Activated naive CD4-positive, alpha-beta T cell treated with anti-CD3 and anti-CD28 coated beads for 36 hours (primary cell): ENCODE measurements at regions of chr4 and their contacts with region 1.

Region 1: GRCh38 chr4:1266881-1267763 is 18.2 kb upstream of the CTBP1 start:
- DNase-seq: no peak
- H3K4me3 Mint-ChIP-seq: peak overlapping the region; percentile 58
- H3K27ac Mint-ChIP-seq: peak overlapping the region; percentile 65
- H3K4me1 Mint-ChIP-seq: peaks cover 10% of the 10 kb centered on the region
- H3K27me3 Mint-ChIP-seq: no peaks in the 10 kb centered on the region

Region 2: DNA sequence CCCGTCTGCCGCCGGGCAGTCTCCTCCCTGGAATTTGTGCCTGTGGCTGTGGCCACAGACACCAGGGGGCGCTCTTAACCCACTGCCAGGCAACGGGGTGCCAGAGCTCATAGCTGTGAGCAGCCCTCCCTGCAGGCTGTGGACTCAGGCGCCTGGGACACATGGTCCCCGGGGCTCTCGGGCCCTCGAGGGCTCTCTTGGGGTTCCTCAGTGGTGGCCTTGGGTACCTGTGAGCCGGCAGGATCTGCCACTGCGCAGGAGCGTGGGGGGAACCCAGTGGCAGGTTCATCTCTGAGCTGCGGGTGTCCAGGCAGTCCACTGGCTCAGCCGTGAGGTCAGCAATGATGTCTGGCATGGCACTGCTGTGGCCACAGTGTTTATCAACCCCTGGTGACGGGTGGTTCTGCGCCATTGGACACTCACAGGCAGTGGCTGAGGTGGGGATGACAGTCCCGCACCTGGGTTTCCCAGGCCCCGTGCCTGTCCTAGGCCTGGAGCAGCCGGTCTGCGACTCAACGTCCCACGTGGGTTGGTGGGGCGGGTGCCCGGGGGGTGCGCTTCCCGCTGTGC is 524.3 kb before region 1 on chr4:
- CTCF ChIA-PET with region 1: interaction called, 3 read pairs
- intact Hi-C with region 1: loop called (anchors 5 kb)
- DNase-seq: peak; percentile 85
- H3K4me3 Mint-ChIP-seq: no peak overlapping the region
- H3K27ac Mint-ChIP-seq: no peak overlapping the region
- H3K4me1 Mint-ChIP-seq: peaks cover 1% of the 10 kb centered on the region
- H3K27me3 Mint-ChIP-seq: no peaks in the 10 kb centered on the region

Region 3: GRCh38 chr4:825238-825835 is 441.8 kb before region 1 on chr4:
- CTCF ChIA-PET with region 1: no interaction called
- intact Hi-C with region 1: no loop called
- DNase-seq: no peak
- H3K4me3 Mint-ChIP-seq: no peak overlapping the region
- H3K27ac Mint-ChIP-seq: no peak overlapping the region
- H3K4me1 Mint-ChIP-seq: peaks cover 3% of the 10 kb centered on the region
- H3K27me3 Mint-ChIP-seq: peaks cover 41% of the 10 kb centered on the region

Region 4: GRCh38 chr4:1130316-1131186 is 136.6 kb before region 1 on chr4:
- CTCF ChIA-PET with region 1: interaction called, 45 read pairs
- intact Hi-C with region 1: loop called (anchors 1 kb)
- DNase-seq: peak; percentile 80
- H3K4me3 Mint-ChIP-seq: no peak overlapping the region
- H3K27ac Mint-ChIP-seq: no peak overlapping the region
- H3K4me1 Mint-ChIP-seq: peaks cover 2% of the 10 kb centered on the region
- H3K27me3 Mint-ChIP-seq: peaks cover 4% of the 10 kb centered on the region

Region 5: DNA sequence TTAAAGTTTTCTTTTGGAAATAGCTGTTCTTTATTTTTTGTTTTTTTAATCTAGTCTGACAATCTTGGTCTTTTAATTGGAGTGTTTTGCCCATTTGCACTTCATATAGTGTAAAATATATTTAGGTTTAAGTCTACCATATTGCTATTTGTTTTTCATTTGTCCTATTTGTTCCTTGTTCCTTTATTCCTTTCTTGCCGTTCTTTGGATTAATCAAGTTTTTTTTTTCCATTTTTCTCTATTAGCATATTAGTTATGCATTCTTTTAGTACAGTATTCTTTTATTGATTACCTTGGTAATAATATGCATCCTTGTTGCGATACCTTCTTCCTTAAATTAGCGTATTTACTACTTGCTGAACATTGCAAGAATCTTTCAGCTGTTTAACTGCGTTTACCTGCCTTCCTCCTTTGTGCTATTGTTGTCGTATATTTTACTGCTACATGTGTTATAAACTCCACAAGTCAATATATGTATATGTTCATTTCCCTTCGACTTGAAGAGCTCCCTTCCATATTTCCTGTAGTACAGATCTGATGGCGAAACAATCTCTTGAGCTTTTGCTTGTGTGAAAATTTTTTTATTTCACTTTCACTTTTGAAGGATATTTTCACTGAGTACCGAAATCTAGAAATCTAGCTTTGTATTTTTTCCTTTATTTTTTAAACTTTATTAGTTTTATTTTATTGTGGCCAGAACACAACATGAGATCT is 129.9 kb before region 1 on chr4:
- CTCF ChIA-PET with region 1: interaction called, 45 read pairs
- intact Hi-C with region 1: no loop called
- DNase-seq: no peak
- H3K4me3 Mint-ChIP-seq: peak overlapping the region; percentile 75
- H3K27ac Mint-ChIP-seq: no peak overlapping the region
- H3K4me1 Mint-ChIP-seq: peaks cover 11% of the 10 kb centered on the region
- H3K27me3 Mint-ChIP-seq: peaks cover 5% of the 10 kb centered on the region

Region 6: GRCh38 chr4:1167247-1167949 is 99.7 kb before region 1 on chr4:
- CTCF ChIA-PET with region 1: interaction called, 46 read pairs
- intact Hi-C with region 1: loop called (anchors 1 kb)
- DNase-seq: peak; percentile 93
- H3K4me3 Mint-ChIP-seq: peak overlapping the region; percentile 74
- H3K27ac Mint-ChIP-seq: no peak overlapping the region
- H3K4me1 Mint-ChIP-seq: peaks cover 18% of the 10 kb centered on the region
- H3K27me3 Mint-ChIP-seq: peaks cover 15% of the 10 kb centered on the region

Region 7: GRCh38 chr4:1289207-1290164 is 22.4 kb after region 1 on chr4 and contains the start of gene MAEA:
- CTCF ChIA-PET with region 1: interaction called, 10 read pairs
- intact Hi-C with region 1: no loop called
- DNase-seq: peak; percentile 98
- H3K4me3 Mint-ChIP-seq: peak within 1 kb of the TSS; percentile 87
- H3K27ac Mint-ChIP-seq: peak within 1 kb of the TSS; percentile 82
- H3K4me1 Mint-ChIP-seq: peaks cover 40% of the 10 kb centered on the region
- H3K27me3 Mint-ChIP-seq: no peaks in the 10 kb centered on the region
- total RNA-seq, gene MAEA: 25.2 to 29.4 TPM

Region 8: GRCh38 chr4:1887052-1887451 is 619.9 kb after region 1 on chr4:
- CTCF ChIA-PET with region 1: no interaction called
- intact Hi-C with region 1: no loop called
- DNase-seq: no peak
- H3K4me3 Mint-ChIP-seq: no peak overlapping the region
- H3K27ac Mint-ChIP-seq: no peak overlapping the region
- H3K4me1 Mint-ChIP-seq: peaks cover 22% of the 10 kb centered on the region
- H3K27me3 Mint-ChIP-seq: no peaks in the 10 kb centered on the region